Naive thymus-derived CD4-positive, alpha-beta T cell (primary cell): ENCODE measurements at regions of chr9 and their contacts with region 1.

Region 1: DNA sequence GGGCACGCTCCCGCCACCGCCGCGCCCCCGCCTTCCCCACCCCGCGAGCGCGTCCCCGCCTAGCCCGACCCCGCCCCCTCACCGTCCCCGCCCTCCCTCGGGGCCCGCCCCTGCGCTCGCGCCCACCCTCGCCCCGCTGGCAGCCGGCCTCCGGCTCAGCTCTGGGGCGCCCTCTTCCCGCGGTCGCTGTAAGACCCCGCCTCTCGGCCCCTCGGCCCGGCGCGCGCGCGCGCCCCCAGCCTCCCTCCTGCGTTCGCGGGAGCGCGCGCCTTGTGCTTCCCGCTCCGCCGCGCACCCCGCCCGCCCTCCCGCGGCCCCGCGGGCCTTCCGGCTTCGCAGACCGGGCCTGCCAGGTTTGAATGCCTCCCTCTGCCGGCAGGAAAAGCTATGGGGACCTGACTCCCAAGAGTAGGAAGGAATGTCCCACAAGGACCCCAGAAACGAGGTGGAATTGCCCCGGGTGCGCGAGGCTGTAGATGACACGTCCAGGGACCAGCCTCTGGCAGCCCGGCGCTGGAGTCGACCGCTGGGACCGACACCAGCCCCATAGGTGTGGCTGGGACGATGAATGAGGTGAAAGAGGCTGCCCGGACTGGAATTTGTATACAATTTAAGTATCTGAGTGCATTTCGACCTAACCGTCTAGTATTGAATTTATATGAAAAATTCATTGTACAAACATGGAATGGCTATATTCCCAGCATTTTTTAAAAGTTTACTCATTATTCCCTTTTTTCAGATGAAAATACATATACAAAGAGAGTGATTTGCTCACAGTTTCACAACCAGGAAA is 416 bp upstream of the PTBP3 start:
- DNase-seq: peak; percentile 78 to 94 (median 88)
- ATAC-seq: peak; percentile 94
- H3K4me3 ChIP-seq: peak overlapping the region; percentile 88
- H3K4me3 Mint-ChIP-seq: peak overlapping the region; percentile 82 to 98 (median 93)
- H3K27ac ChIP-seq: peak overlapping the region; percentile 95
- H3K27ac Mint-ChIP-seq: peak overlapping the region; percentile 88 to 97 (median 90)
- H3K4me1 ChIP-seq: peaks cover 14 to 19% of the 10 kb centered on the region in 2 donors
- H3K4me1 Mint-ChIP-seq: peaks cover 21 to 44% (median 35%) of the 10 kb centered on the region in 7 donors
- H3K27me3 ChIP-seq: no peaks in the 10 kb centered on the region
- H3K27me3 Mint-ChIP-seq: no peaks in the 10 kb centered on the region

Region 2: GRCh38 chr9:111759762-111760639 is 573.8 kb before region 1 on chr9:
- CTCF ChIA-PET with region 1: no interaction called
- POLR2A ChIA-PET with region 1: no interaction called
- intact Hi-C with region 1: loop called in 1 of 2 experiments (anchors 1 kb)
- DNase-seq: peak in 8 of 9 donors; percentile 25 to 77 (median 68)
- ATAC-seq: peak; percentile 82
- H3K4me3 ChIP-seq: no peak overlapping the region
- H3K4me3 Mint-ChIP-seq: no peak overlapping the region
- H3K27ac ChIP-seq: no peak overlapping the region
- H3K27ac Mint-ChIP-seq: no peak overlapping the region
- H3K4me1 ChIP-seq: no peaks in the 10 kb centered on the region
- H3K4me1 Mint-ChIP-seq: peaks cover 3 to 8% (median 5%) of the 10 kb centered on the region in 7 donors
- H3K27me3 ChIP-seq: no peaks in the 10 kb centered on the region
- H3K27me3 Mint-ChIP-seq: no peaks in the 10 kb centered on the region

Region 3: GRCh38 chr9:111965566-111966019 is 368.2 kb before region 1 on chr9:
- CTCF ChIA-PET with region 1: no interaction called
- POLR2A ChIA-PET with region 1: no interaction called
- intact Hi-C with region 1: no loop called
- DNase-seq: no peak
- ATAC-seq: no peak
- H3K4me3 ChIP-seq: no peak overlapping the region
- H3K4me3 Mint-ChIP-seq: no peak overlapping the region
- H3K27ac ChIP-seq: no peak overlapping the region
- H3K27ac Mint-ChIP-seq: no peak overlapping the region
- H3K4me1 ChIP-seq: no peaks in the 10 kb centered on the region
- H3K4me1 Mint-ChIP-seq: peaks cover 0 to 4% (median 0%) of the 10 kb centered on the region in 7 donors
- H3K27me3 ChIP-seq: no peaks in the 10 kb centered on the region
- H3K27me3 Mint-ChIP-seq: peaks cover 0 to 10% (median 0%) of the 10 kb centered on the region in 5 donors

Region 4: DNA sequence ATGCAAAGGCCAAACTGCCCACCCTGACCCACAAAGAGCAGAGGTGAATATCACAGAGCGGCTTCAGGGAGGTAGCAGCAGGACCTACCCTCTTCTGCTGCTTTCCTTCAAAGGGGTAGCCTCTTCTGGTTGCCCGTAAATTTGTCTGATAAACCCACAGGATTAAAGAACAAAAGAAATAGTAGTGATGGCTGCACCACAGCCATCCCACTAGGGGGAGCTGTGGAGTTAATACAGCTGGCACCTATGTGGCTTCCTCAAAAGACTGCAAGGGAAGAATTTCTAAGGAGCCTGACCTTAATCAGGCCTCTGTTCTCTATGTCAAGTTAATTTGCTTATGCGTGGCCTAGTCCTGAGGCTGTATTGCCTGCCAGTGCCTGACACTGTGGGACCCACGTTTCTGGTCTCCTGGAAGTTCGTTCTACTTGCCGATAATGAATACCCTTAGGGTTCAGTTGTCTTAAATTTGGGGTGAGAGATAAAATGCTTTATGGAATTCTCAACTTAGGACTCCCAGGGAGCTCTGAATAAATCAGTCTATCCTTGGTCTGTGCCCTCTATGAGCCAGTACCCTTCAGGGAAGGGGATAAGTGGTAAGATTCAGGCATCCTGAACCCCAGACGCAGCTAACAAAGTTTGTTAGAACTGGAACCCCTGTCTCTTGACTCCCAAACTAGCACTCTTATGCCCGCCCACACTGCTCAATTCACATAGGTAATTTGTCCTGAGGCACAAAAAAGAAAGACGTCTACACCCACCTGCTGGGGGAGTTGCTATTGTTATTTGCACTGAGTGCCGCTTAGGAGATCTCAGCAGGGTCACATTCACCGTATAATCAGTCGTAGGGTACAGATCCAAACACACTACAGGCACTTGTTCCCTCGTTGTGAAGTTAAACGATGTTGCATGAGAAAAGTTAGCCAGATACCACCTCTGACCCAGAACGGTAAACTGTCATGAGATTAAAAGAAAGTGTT is 235.8 kb before region 1 on chr9:
- CTCF ChIA-PET with region 1: interaction called, 4 read pairs
- POLR2A ChIA-PET with region 1: interaction called, 5 read pairs
- intact Hi-C with region 1: loop called (anchors 1 kb)
- DNase-seq: peak; percentile 41 to 85 (median 68)
- ATAC-seq: peak; percentile 93
- H3K4me3 ChIP-seq: no peak overlapping the region
- H3K4me3 Mint-ChIP-seq: no peak overlapping the region
- H3K27ac ChIP-seq: no peak overlapping the region
- H3K27ac Mint-ChIP-seq: peak overlapping the region in 1 of 9 donors; percentile 15
- H3K4me1 ChIP-seq: peaks cover 0 to 4% of the 10 kb centered on the region in 2 donors
- H3K4me1 Mint-ChIP-seq: peaks cover 2 to 32% (median 12%) of the 10 kb centered on the region in 7 donors
- H3K27me3 ChIP-seq: no peaks in the 10 kb centered on the region
- H3K27me3 Mint-ChIP-seq: peaks cover 0 to 3% (median 0%) of the 10 kb centered on the region in 5 donors

Region 5: DNA sequence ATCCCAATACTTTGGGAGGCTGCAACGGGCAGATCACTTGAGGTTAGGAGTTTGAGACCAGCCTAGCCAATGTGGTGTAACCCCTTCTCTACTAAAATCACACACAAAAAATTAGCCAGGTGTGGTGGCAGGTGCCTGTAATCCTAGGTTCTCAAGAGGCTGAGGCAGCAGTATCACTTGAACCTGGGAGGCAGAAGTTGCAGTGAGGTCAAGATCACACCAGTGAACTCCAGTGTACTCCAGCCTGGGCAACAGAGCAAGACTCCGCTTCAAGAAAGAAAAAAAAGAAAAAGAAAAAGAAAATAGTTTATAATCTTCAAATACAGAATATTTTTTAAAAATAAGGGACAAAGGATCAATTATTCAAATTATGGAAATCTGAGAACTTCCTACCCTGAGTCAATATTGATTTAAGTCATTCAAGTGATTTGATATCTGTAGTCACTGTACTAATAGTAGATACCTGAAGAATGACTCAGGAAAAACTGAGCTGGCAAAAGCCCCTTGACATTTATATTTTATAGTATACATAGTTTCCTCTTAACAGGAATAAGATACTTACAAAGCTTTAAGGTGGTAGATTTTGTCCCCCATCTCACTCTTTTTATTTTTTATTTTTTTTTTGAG is 62.3 kb before region 1 on chr9:
- CTCF ChIA-PET with region 1: interaction called, 3 read pairs
- POLR2A ChIA-PET with region 1: no interaction called
- intact Hi-C with region 1: loop called in 1 of 2 experiments (anchors 10 kb)
- DNase-seq: no peak
- ATAC-seq: no peak
- H3K4me3 ChIP-seq: no peak overlapping the region
- H3K4me3 Mint-ChIP-seq: no peak overlapping the region
- H3K27ac ChIP-seq: no peak overlapping the region
- H3K27ac Mint-ChIP-seq: no peak overlapping the region
- H3K4me1 ChIP-seq: peaks cover 0 to 9% of the 10 kb centered on the region in 2 donors
- H3K4me1 Mint-ChIP-seq: peaks cover 26 to 54% (median 46%) of the 10 kb centered on the region in 7 donors
- H3K27me3 ChIP-seq: no peaks in the 10 kb centered on the region
- H3K27me3 Mint-ChIP-seq: no peaks in the 10 kb centered on the region

Region 6: DNA sequence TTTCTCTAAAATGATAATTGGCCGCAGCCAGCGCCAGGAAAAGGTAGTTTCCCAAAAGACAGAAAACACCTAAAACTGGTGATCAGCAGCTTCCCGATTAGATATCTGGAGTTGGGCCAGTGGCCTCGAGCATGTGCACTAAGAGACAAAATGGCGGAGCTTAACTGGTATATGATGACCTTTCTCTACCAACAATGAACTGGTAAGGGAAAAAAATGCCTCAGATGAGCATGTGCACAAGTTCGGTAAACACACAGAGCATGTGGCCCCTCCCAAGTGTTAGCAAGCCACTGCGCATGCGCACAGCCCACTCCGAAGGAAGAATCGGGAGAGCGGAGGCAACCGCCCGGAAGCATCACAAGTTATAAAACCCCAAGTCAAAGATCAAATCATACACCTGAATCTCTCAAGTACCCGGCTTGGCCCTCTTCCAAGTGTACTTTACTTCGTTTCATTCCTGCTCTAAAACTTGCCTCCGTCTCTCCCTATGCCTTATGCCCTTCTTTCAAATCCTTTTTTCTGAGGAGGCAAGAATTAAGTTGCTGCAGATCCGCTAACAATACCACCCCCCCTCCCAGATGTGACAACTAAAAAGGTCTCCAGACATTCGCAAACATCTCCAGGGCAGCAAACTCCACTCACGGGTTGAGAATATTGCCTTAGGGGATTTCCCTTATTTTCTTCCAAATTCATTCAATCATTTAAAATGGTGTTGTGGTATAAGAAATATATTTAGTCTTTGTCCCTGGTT is 14.6 kb after region 1 on chr9:
- CTCF ChIA-PET with region 1: interaction called, 3 read pairs
- POLR2A ChIA-PET with region 1: interaction called, 3 read pairs
- intact Hi-C with region 1: loop called in 1 of 2 experiments (anchors 1 kb)
- DNase-seq: peak; percentile 43 to 75 (median 66)
- ATAC-seq: peak; percentile 63
- H3K4me3 ChIP-seq: peak overlapping the region; percentile 19
- H3K4me3 Mint-ChIP-seq: peak overlapping the region; percentile 54 to 83 (median 80)
- H3K27ac ChIP-seq: no peak overlapping the region
- H3K27ac Mint-ChIP-seq: peak overlapping the region; percentile 6 to 87 (median 72)
- H3K4me1 ChIP-seq: peaks cover 0 to 3% of the 10 kb centered on the region in 2 donors
- H3K4me1 Mint-ChIP-seq: peaks cover 7 to 18% (median 13%) of the 10 kb centered on the region in 7 donors
- H3K27me3 ChIP-seq: no peaks in the 10 kb centered on the region
- H3K27me3 Mint-ChIP-seq: peaks cover 0 to 2% (median 0%) of the 10 kb centered on the region in 5 donors

Region 7: DNA sequence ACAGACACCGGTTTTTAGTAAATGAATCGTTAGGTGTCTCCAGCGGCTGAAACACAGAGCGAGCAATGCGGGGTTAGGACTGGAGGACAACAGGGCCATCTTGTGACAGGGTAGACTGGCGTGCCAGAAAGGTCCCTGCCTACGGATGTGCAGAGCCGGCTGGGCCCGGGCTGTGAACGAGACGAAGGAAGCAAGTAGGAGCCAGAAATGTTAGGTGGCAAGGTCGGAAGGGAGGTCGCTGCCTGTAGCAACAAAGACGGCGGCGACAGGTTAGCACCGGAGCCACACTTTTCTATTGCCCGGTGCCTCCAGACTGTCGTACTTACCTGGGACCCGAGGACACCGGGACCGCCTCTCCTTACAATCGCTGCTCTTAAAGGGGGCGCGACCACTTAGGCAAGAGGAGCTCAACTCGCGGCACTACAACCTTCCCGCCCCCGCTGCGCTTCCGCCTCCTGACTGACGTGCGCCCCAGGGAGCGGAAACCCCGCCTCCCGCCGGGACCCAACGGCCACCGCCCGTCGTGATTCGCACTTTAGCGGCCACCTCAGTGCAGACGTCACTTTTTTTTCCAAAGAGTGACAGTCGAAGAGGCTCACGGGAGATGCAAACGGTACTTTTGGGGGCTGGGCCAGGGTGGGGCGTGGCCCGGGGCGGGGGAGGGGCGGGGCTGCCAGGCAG is 384.0 kb after region 1 on chr9 and contains the start of gene INIP:
- CTCF ChIA-PET with region 1: no interaction called
- POLR2A ChIA-PET with region 1: no interaction called
- intact Hi-C with region 1: loop called (anchors 1 kb)
- DNase-seq: peak; percentile 91 to 99 (median 98)
- ATAC-seq: peak; percentile 94
- H3K4me3 ChIP-seq: peak within 1 kb of the TSS; percentile 82
- H3K4me3 Mint-ChIP-seq: peak within 1 kb of the TSS; percentile 83 to 100 (median 96)
- H3K27ac ChIP-seq: peak within 1 kb of the TSS; percentile 96
- H3K27ac Mint-ChIP-seq: peak within 1 kb of the TSS; percentile 96 to 100 (median 99)
- H3K4me1 ChIP-seq: peaks cover 10% of the 10 kb centered on the region in 2 donors
- H3K4me1 Mint-ChIP-seq: peaks cover 14 to 39% (median 28%) of the 10 kb centered on the region in 7 donors
- H3K27me3 ChIP-seq: no peaks in the 10 kb centered on the region
- H3K27me3 Mint-ChIP-seq: no peaks in the 10 kb centered on the region
- total RNA-seq, gene INIP: 13.8 to 35.0 (median 28.3) TPM

Region 8: GRCh38 chr9:113410207-113410864 is 1076.5 kb after region 1 on chr9 and contains the starts of genes C9orf43 and POLE3:
- CTCF ChIA-PET with region 1: no interaction called
- POLR2A ChIA-PET with region 1: no interaction called
- intact Hi-C with region 1: loop called in 1 of 2 experiments (anchors 2 kb)
- DNase-seq: peak; percentile 90 to 98 (median 96)
- ATAC-seq: peak; percentile 95
- H3K4me3 ChIP-seq: peak within 1 kb of the TSS; percentile 92
- H3K4me3 Mint-ChIP-seq: peak within 1 kb of the TSS; percentile 94 to 100 (median 98)
- H3K27ac ChIP-seq: peak within 1 kb of the TSS; percentile 89
- H3K27ac Mint-ChIP-seq: peak within 1 kb of the TSS; percentile 98 to 100 (median 99)
- H3K4me1 ChIP-seq: peaks cover 3 to 9% of the 10 kb centered on the region in 2 donors
- H3K4me1 Mint-ChIP-seq: peaks cover 20 to 42% (median 31%) of the 10 kb centered on the region in 7 donors
- H3K27me3 ChIP-seq: no peaks in the 10 kb centered on the region
- H3K27me3 Mint-ChIP-seq: peaks cover 0 to 2% (median 0%) of the 10 kb centered on the region in 5 donors
- total RNA-seq, gene C9orf43: 0.41 to 0.97 (median 0.61) TPM
- total RNA-seq, gene POLE3: 38.6 to 65.3 (median 50.9) TPM